ENCODE measurements at regions of chr9 and their contacts with region 1.

Region 1: DNA sequence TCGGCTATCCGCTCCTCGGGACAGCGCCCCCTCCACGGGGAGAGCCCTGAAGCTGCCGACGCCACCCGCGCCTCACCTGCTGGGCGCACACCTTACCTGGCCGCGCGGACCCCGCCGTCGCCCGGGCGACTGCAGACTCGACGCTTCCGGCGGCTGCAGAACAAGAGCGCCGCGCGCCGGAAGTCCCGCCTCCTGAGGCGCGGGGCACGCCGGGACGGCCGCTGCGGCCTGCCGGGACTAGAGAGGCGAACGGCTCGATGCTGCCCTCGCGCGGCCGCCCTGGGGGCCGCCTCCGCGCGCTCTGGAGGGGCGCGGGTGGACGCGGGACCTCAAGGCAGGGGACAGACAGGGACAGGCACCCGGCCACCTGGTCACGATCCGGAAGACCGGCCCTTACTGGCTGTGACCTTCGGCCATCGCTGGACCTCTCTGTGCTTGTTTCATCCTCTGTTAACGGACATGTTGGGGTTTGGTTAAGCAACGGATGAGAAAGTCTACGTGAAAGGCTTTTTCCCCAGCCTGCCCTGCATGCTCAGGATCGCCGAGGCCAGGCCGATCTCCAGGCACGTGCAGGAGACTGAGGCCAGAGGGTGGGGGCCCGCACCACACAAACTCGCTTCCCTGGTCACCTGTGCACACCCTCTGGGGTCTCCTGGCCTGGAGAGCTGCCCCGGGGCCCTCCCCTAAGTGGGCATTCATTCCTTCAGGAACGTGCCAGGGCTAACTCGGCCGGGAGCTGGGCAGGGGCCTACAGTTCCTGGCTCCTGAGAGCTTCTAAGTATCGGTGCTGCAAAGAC is at the start of gene SNAPC4:
- DNase-seq: peak; percentile 76 to 97
- H3K4me3 ChIP-seq: peak within 1 kb of the TSS; percentile 73 to 84 (median 79)
- H3K27ac ChIP-seq: peak within 1 kb of the TSS; percentile 29; the same call in 1 of the 2 replicates
- H3K4me1 ChIP-seq: peaks cover 0 to 10% (median 7%) of the 10 kb centered on the region in 4 experiments; a peak in 5 of 7 replicates
- H3K27me3 ChIP-seq: no peaks in the 10 kb centered on the region
- CTCF ChIP-seq: peak in 2 of 3 experiments; percentile 86 to 92; a peak in 3 of 4 replicates
- EP300 ChIP-seq: peak in 1 of 2 experiments; percentile 37; a peak in 1 of 3 replicates
- POLR2A ChIP-seq: peak in 1 of 2 experiments; percentile 86; a peak in 2 of 3 replicates
- RAD21 ChIP-seq: peak; percentile 57 to 77
- total RNA-seq, gene SNAPC4: 15.1 and 18.1 TPM in 2 replicates

Region 2: GRCh38 chr9:136189394-136190236 is 210.6 kb before region 1 on chr9:
- CTCF ChIA-PET with region 1: no interaction called
- POLR2A ChIA-PET with region 1: no interaction called
- DNase-seq: peak in 1 of 2 experiments; percentile 50
- H3K4me3 ChIP-seq: no peak overlapping the region
- H3K27ac ChIP-seq: no peak overlapping the region
- H3K4me1 ChIP-seq: peaks cover 0 to 11% (median 6%) of the 10 kb centered on the region in 4 experiments; a peak in 5 of 7 replicates
- H3K27me3 ChIP-seq: peaks cover 33 to 49% (median 46%) of the 10 kb centered on the region in 4 experiments
- CTCF ChIP-seq: no peak
- EP300 ChIP-seq: no peak
- POLR2A ChIP-seq: no peak
- RAD21 ChIP-seq: no peak

Region 3: GRCh38 chr9:136327313-136327974 is 72.8 kb before region 1 on chr9 and contains the start of gene GPSM1:
- CTCF ChIA-PET with region 1: no interaction called
- POLR2A ChIA-PET with region 1: no interaction called
- DNase-seq: no peak
- H3K4me3 ChIP-seq: peak within 1 kb of the TSS; percentile 30 to 63 (median 42)
- H3K27ac ChIP-seq: no peak within 1 kb of the TSS
- H3K4me1 ChIP-seq: peaks cover 0 to 24% (median 20%) of the 10 kb centered on the region in 4 experiments; a peak in 6 of 7 replicates
- H3K27me3 ChIP-seq: no peaks in the 10 kb centered on the region
- CTCF ChIP-seq: no peak
- EP300 ChIP-seq: no peak
- POLR2A ChIP-seq: no peak
- RAD21 ChIP-seq: no peak
- total RNA-seq, gene GPSM1: 15.7 and 18.0 TPM in 2 replicates

Region 4: DNA sequence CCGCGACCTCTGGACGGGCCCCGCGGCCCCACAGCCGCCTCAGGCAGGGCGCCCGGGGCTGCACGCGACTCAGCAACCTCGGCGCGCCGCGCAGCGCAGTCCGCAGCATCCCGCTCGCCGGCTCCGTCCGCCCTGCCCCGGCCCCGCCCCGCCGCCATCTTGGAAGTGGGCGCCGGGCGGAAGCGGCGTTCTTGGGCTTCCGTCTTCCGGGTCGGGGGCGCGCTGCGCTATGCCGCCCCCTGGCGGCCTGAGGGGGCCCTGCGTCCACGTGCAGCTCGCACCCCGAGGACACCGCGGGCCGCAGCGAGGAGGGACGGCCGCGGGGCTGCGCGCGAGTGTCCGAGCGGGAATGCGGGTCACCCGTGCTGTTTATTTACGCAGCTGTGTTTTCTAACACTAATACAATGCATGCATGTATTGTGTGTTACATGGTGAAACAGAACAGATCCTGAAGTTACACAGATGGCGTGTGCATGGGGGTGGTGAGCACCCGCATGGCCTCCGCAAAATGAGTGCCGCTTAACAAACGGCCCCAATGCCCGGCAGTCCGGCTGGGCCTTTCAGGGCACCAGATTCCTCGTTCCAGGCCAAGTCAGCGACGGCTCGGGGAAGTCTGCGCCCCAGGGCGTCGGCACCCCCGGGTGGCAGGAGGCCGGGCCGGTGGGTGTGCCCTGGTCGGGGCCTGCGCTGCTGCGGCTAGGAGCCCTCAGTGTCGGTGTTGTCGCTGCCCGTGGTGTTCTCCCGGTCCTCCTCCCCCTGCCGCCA is 36.4 kb before region 1 on chr9 and contains the start of gene DNLZ:
- CTCF ChIA-PET with region 1: interaction called, 4 read pairs
- POLR2A ChIA-PET with region 1: interaction called, 72 read pairs
- DNase-seq: peak in 1 of 2 experiments; percentile 92
- H3K4me3 ChIP-seq: peak within 1 kb of the TSS; percentile 71 to 97 (median 80)
- H3K27ac ChIP-seq: peak within 1 kb of the TSS; percentile 75; the same call in 1 of the 2 replicates
- H3K4me1 ChIP-seq: peaks cover 0 to 8% (median under 1%) of the 10 kb centered on the region in 4 experiments; a peak in 3 of 7 replicates
- H3K27me3 ChIP-seq: peaks cover 0 to 2% (median 0%) of the 10 kb centered on the region in 4 experiments; a peak in 2 of 7 replicates
- CTCF ChIP-seq: peak in 2 of 3 experiments; percentile 87 to 95; a peak in 3 of 4 replicates
- EP300 ChIP-seq: peak in 1 of 2 experiments; percentile 58; a peak in 1 of 3 replicates
- POLR2A ChIP-seq: peak in 1 of 2 experiments; percentile 46; a peak in 1 of 3 replicates
- RAD21 ChIP-seq: peak; percentile 45 to 68
- total RNA-seq, gene DNLZ: 17.9 and 19.0 TPM in 2 replicates

Region 5: DNA sequence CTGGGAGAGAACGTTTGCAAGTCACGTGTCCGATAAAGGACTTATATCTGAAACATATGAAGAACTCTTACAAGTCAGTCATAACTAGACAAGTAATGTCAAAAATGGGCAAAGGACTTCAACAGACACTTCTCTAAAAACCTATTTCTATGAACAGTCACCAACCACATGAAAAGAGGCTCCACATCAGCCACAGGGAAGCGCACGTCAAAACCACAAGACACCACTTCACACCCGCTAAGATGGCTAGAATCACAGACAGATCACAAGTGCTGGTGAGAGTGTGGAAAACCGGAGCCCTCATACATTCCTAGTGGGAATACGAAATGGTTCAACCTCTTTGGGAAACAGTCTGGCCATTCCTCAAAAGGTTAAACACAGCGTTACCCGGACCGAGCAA is 15.2 kb before region 1 on chr9:
- CTCF ChIA-PET with region 1: interaction called, 26 read pairs
- POLR2A ChIA-PET with region 1: interaction called, 139 read pairs
- DNase-seq: no peak
- H3K4me3 ChIP-seq: no peak overlapping the region
- H3K27ac ChIP-seq: no peak overlapping the region
- H3K4me1 ChIP-seq: no peaks in the 10 kb centered on the region
- H3K27me3 ChIP-seq: no peaks in the 10 kb centered on the region
- CTCF ChIP-seq: no peak
- EP300 ChIP-seq: no peak
- POLR2A ChIP-seq: no peak
- RAD21 ChIP-seq: no peak

Region 6: GRCh38 chr9:136418182-136419091 is 18.2 kb after region 1 on chr9:
- CTCF ChIA-PET with region 1: interaction called, 6 read pairs
- POLR2A ChIA-PET with region 1: interaction called, 123 read pairs
- DNase-seq: no peak
- H3K4me3 ChIP-seq: no peak overlapping the region
- H3K27ac ChIP-seq: no peak overlapping the region
- H3K4me1 ChIP-seq: no peaks in the 10 kb centered on the region
- H3K27me3 ChIP-seq: no peaks in the 10 kb centered on the region
- CTCF ChIP-seq: no peak
- EP300 ChIP-seq: no peak
- POLR2A ChIP-seq: no peak
- RAD21 ChIP-seq: no peak

Region 7: GRCh38 chr9:136439550-136440408 is 39.5 kb after region 1 on chr9 and contains the start of gene INPP5E:
- CTCF ChIA-PET with region 1: interaction called, 5 read pairs
- POLR2A ChIA-PET with region 1: interaction called, 23 read pairs
- DNase-seq: peak; percentile 21 to 98
- H3K4me3 ChIP-seq: peak within 1 kb of the TSS; percentile 74 to 89 (median 76)
- H3K27ac ChIP-seq: no peak within 1 kb of the TSS; the same call in 1 of the 2 replicates
- H3K4me1 ChIP-seq: peaks cover 0 to 7% (median 3%) of the 10 kb centered on the region in 4 experiments; a peak in 1 of 7 replicates
- H3K27me3 ChIP-seq: peaks cover 0 to 2% (median 0%) of the 10 kb centered on the region in 4 experiments; a peak in 2 of 7 replicates
- CTCF ChIP-seq: peak in 2 of 3 experiments; percentile 66 to 73; a peak in 3 of 4 replicates
- EP300 ChIP-seq: no peak
- POLR2A ChIP-seq: peak in 1 of 2 experiments; percentile 59; a peak in 1 of 3 replicates
- RAD21 ChIP-seq: no peak
- total RNA-seq, gene INPP5E: 11.3 and 11.5 TPM in 2 replicates

Region 8: GRCh38 chr9:136587145-136587943 is 187.1 kb after region 1 on chr9:
- CTCF ChIA-PET with region 1: no interaction called
- POLR2A ChIA-PET with region 1: no interaction called
- DNase-seq: peak in 1 of 2 experiments; percentile 85
- H3K4me3 ChIP-seq: peak overlapping the region in 3 of 4 experiments; percentile 32 to 53 (median 36); a peak in 6 of 8 replicates
- H3K27ac ChIP-seq: 0 out of 2 replicates have a peak overlapping the region, but pooled peaks have one; percentile 56
- H3K4me1 ChIP-seq: peaks cover 3 to 48% (median 36%) of the 10 kb centered on the region in 4 experiments
- H3K27me3 ChIP-seq: no peaks in the 10 kb centered on the region
- CTCF ChIP-seq: no peak
- EP300 ChIP-seq: 0 out of 3 replicates have a peak, but pooled peaks of 1 of the 2 experiments have one; percentile 40
- POLR2A ChIP-seq: no peak
- RAD21 ChIP-seq: no peak; a peak in 1 of 4 replicates

Measured in H1 (cell line).